Pancreas (tissue), 10 donors: ENCODE measurements at regions of chrX and their contacts with region 1.

Region 1: GRCh38 chrX:15143050-15143824 is 126.6 kb downstream of the ASB9 start:
- DNase-seq: peak in 5 of 6 donors; percentile 20 to 76 (median 50)
- ATAC-seq: peak; percentile 78 to 92 (median 90)
- H3K4me3 ChIP-seq: no peak overlapping the region
- H3K27ac ChIP-seq: no peak overlapping the region
- H3K4me1 ChIP-seq: no peaks in the 10 kb centered on the region
- H3K27me3 ChIP-seq: peaks cover 0 to 13% (median 3%) of the 10 kb centered on the region in 4 donors
- CTCF ChIP-seq: peak; percentile 63 to 82 (median 76)

Region 2: GRCh38 chrX:14095702-14096101 is 1047.5 kb before region 1 on chrX:
- intact Hi-C with region 1: loop called in 1 of 3 experiments (anchors 10 kb)
- DNase-seq: peak in 4 of 6 donors; percentile 4 to 50 (median 22)
- ATAC-seq: peak; percentile 83 to 94 (median 90)
- H3K4me3 ChIP-seq: no peak overlapping the region
- H3K27ac ChIP-seq: no peak overlapping the region
- H3K4me1 ChIP-seq: no peaks in the 10 kb centered on the region
- H3K27me3 ChIP-seq: peaks cover 0 to under 1% (median 0%) of the 10 kb centered on the region in 4 donors
- CTCF ChIP-seq: peak; percentile 18 to 62 (median 31)